ENCODE measurements at regions of chr7 and their contacts with region 1.

Region 1: DNA sequence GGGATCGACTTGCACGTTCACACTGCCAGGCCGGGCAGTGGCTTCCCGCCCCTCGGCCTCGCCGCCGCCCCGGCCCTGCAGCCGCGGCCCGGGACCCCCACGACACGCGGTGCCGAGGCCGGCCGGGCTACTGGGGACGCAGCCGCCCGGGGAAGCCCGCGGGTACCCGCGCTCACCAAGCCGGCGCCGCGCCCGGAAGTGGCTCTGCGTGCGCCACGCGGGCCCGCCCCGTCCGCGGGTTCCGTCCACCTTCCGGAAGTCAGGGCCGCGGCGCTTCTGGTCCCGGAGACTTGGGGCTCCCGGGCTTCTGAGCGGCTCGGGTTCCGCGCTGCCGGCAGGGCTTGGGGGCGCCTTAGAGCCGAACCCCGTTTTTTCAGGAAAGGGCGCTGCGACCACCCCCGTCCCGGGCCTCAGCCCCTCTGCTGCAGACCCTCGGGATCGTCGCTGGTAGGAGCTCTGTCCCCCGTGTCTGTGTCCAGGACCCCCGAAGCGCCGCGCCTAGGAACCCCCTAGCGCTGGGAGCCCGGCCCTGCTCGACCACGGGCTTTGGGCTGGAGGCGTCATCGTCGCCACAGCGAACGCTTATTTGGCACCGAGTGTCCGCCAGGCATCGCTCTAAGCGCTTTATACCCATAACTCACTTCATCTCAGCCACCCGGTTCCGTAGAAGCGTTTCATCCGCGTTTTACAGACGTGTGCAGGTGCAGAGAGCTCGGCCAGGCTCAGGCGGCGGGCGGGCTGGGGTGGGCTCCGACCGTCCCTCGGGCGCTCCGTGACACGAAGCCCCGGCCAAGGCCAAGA is at the start of gene PSMG3:
- DNase-seq: peak; percentile 92
- H3K4me3 Mint-ChIP-seq: peak within 1 kb of the TSS; percentile 91
- H3K27ac Mint-ChIP-seq: peak within 1 kb of the TSS; percentile 98
- H3K4me1 Mint-ChIP-seq: peaks cover 38% of the 10 kb centered on the region
- H3K27me3 Mint-ChIP-seq: no peaks in the 10 kb centered on the region
- total RNA-seq, gene PSMG3: 48.1 to 55.0 TPM

Region 2: GRCh38 chr7:1503816-1504775 is 65.9 kb before region 1 on chr7 and contains the start of gene INTS1:
- CTCF ChIA-PET with region 1: no interaction called
- POLR2A ChIA-PET with region 1: no interaction called
- intact Hi-C with region 1: loop called (anchors 5 kb)
- DNase-seq: peak; percentile 93
- H3K4me3 Mint-ChIP-seq: peak within 1 kb of the TSS; percentile 91
- H3K27ac Mint-ChIP-seq: peak within 1 kb of the TSS; percentile 80
- H3K4me1 Mint-ChIP-seq: peaks cover 30% of the 10 kb centered on the region
- H3K27me3 Mint-ChIP-seq: no peaks in the 10 kb centered on the region
- total RNA-seq, gene INTS1: 86.4 to 92.5 TPM

Region 3: DNA sequence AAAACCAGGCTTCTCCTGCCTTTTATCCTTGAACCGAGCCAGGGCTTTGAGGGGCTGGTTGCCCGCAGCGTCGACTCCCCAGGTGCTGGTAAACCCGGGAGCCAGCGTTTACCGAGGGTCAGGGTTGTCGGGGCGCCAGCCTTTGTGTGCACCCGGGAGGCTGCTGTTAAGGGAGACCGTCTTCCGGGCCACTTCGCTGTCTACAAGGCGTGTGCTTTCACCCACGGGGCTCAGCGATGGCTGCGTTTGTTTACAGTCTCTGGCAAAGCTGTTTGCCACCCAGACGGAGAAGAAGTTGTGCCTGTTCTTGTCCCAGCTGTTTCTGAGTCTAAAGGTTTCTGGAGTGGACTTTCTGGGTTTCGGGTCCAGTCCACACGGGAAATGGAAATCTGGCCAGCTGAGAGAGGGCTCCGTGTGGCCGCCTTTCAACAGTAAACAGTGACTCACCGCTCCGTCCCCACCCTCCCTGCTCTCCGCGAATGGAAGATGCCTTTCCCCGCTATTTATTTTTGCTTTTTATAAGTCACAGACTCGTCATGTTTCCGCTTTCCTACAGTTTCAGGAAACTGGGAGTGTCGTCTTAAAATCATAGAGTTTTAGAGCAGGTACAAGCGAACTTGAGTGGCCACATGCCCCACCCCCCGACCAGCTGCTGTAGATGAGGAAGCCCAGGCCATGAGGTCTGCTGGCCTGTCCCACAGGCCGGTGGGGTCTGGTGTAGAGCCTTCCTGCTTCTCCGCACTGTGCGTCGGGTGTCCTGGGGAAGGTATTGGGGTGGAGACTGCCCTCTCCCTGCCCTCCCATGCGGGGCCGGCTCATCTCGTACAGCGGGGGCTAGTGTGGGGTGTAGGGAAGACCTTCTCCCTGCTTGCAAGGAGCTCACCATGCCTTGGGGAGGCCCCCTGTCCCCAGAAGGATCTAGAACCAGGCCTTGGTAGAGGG is 37.3 kb before region 1 on chr7:
- CTCF ChIA-PET with region 1: no interaction called
- POLR2A ChIA-PET with region 1: interaction called, 4 read pairs
- intact Hi-C with region 1: loop called (anchors 2 kb)
- DNase-seq: peak; percentile 77
- H3K4me3 Mint-ChIP-seq: peak overlapping the region; percentile 81
- H3K27ac Mint-ChIP-seq: peak overlapping the region; percentile 82
- H3K4me1 Mint-ChIP-seq: peaks cover 26% of the 10 kb centered on the region
- H3K27me3 Mint-ChIP-seq: no peaks in the 10 kb centered on the region